ENCODE measurements at regions of chr7 and their contacts with region 1.

Region 1: GRCh38 chr7:73971704-73972341 is 56.1 kb upstream of the ELN start:
- DNase-seq: no peak
- H3K4me3 ChIP-seq: no peak overlapping the region
- H3K27ac ChIP-seq: no peak overlapping the region
- H3K4me1 ChIP-seq: no peaks in the 10 kb centered on the region
- H3K27me3 ChIP-seq: peaks cover 4% of the 10 kb centered on the region
- CTCF ChIP-seq: peak; percentile 39 to 61 (median 42)

Region 2: DNA sequence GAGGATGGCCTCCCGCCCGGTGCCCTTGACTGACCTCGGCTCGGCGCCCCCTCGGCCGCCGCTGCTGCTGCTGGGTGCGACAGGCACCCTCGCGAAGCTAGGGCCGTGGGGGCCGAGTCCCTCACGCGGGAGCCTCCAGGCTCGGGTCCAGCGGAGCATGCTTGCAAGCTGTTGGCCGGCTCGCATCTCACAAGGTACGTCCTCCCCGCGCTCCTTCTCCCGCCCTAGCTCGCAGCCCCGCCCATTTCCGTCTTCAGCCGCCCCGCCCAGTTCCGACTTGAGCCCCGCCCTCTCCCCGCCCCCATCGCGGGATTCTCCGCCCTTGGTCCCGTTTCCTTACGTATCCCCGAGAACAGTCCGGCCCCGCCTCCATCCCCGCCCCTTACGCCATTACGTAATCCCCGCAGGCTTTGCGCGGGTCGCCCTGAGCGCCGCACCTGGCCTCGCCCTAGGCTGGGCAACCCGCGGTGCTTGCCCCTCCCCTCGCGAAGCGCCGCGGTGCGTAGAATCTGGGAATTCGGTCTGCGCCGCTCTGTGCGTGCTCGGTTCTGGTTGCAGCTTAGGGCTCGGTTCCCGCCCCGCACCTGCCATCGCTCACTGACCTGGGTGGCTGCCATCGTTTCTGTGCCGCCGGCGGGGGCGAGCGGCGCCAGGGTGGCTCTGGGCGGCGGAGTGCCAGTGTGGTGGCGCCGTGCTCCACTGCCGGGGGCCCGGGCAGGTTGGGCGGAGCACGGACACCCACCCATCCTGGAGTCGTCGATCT is 233.0 kb before region 1 on chr7 and contains the start of gene ABHD11:
- dilution Hi-C with region 1: no loop called
- DNase-seq: peak; percentile 84
- H3K4me3 ChIP-seq: peak within 1 kb of the TSS; percentile 82 to 87 (median 83)
- H3K27ac ChIP-seq: peak within 1 kb of the TSS; percentile 78
- H3K4me1 ChIP-seq: peaks cover 20% of the 10 kb centered on the region
- H3K27me3 ChIP-seq: no peaks in the 10 kb centered on the region
- CTCF ChIP-seq: no peak
- polyA plus RNA-seq, gene ABHD11: 11.3 to 15.2 TPM (median 11.5 TPM) in 3 replicates

Region 3: DNA sequence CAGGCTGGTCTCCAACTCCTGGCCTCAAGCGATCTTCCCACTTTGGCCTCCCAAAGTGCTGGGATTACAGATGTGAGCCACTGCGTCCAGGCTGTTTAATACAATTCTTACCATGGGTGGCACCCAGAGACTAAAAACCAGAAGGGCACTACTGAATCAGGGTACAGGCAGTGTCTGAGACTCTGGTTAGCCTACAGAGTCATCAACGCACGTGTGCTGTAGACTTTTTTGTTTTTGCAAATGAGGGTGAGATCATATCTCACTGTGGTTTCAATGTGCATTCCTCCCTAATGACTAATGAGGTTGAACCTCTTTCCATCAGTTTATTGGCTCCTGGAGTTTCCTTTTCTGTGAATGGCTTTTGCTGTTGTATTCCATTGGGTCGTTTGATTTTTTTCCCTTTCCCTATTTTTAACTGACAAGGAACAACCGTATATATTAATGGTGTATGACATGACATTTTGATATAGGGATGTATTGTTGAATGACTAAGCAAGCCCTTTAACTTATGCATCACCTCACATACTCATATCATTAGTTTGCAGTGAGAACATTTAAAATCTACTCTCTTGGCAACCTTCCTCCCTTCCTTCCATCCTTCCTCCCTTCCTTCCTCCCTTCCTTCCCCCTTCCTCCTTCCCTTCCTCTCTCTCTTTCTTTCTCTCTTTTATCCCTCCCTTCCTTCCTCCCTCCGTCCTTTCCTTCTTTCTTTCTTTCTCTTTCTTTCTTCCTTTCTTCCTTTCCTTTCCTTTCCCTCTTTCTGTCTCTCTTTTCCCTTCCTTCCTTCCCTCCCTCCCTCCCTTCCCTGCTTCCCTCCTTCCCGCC is 120.2 kb before region 1 on chr7:
- dilution Hi-C with region 1: loop called (anchors 25 kb)
- DNase-seq: peak; percentile 93
- H3K4me3 ChIP-seq: peak overlapping the region in 1 of 3 experiments; percentile 4
- H3K27ac ChIP-seq: peak overlapping the region; percentile 98
- H3K4me1 ChIP-seq: peaks cover 48% of the 10 kb centered on the region
- H3K27me3 ChIP-seq: peaks cover under 1% of the 10 kb centered on the region
- CTCF ChIP-seq: no peak

Region 4: DNA sequence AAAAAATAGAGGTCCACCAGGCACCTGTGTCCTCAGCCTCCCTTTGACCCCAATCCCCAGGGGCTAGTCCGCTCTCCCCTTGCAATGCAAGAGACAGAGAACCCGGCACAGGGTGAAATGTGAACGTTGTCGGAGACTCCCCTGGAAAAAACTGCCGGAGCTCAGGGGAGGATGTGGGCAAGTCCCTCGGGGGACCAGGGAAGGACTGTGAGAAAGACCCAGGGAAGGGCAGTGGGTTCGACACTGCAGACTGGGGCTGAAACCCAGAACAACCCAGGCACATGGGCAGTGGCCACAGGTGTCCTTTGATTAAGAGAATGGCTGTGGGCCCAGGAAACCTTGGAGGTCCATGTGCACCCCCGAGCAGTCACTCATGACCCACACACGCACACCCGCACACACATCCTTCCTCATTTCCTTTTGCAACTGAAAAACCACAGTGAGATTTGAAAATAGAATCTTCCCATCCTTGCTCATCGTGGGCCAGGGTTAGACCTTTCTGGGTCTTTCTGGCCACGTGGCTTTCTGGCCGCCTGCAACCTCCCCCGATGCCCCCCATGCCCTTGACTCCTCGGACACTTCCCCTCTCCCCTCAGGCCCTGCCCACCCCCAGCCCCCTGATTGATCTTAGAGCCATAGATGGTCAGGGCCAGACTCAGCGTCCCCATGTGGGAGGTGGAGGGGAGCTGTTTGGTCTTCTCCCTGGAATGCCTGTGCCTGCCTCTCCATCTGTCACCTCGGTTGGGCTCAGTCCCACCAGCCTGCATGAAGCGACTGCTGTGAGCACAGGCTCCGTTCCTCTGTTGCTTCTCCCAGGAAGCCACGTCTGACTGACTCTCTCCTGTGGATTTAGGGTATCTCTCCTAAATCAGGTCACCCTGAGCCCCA is 245.9 kb after region 1 on chr7:
- dilution Hi-C with region 1: no loop called
- DNase-seq: no peak
- H3K4me3 ChIP-seq: no peak overlapping the region
- H3K27ac ChIP-seq: no peak overlapping the region
- H3K4me1 ChIP-seq: no peaks in the 10 kb centered on the region
- H3K27me3 ChIP-seq: no peaks in the 10 kb centered on the region
- CTCF ChIP-seq: no peak

Measured in keratinocyte (primary cell).